Stomach (tissue), 19 donors: ENCODE measurements at regions of chr1 and their contacts with region 1.

Region 1: DNA sequence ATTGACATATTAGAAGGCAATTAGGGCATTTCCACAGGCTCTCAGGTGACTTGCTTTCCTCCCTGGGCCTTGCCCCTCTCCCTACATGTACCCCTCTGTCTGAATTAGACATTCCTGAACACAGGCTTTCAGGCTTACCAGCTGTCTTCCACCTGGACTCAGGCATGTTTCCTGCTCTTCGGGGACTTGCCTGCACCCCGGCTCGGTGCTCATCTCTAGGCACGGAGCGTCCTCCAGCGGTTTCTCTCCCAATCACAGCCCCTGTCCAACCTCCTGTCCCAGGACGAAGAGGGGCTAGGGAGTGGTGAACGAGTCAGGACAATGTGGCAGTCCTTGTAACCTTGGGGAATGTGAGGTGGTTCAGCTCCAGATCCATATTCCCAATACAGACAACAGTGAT is 4.2 kb downstream of the PROK1 start:
- DNase-seq: no peak
- H3K4me3 ChIP-seq: no peak overlapping the region
- H3K27ac ChIP-seq: no peak overlapping the region
- H3K4me1 ChIP-seq: no peaks in the 10 kb centered on the region
- H3K27me3 ChIP-seq: peaks cover 0 to 37% (median 5%) of the 10 kb centered on the region in 3 donors
- CTCF ChIP-seq: no peak
- EP300 ChIP-seq: no peak
- POLR2A ChIP-seq: no peak

Region 2: GRCh38 chr1:110136911-110137310 is 318.2 kb before region 1 on chr1:
- intact Hi-C with region 1: no loop called
- DNase-seq: peak; percentile 28 to 69
- H3K4me3 ChIP-seq: no peak overlapping the region
- H3K27ac ChIP-seq: no peak overlapping the region
- H3K4me1 ChIP-seq: peaks cover 0 to 8% (median 2%) of the 10 kb centered on the region in 4 donors
- H3K27me3 ChIP-seq: peaks cover 0 to 50% (median 13%) of the 10 kb centered on the region in 3 donors
- CTCF ChIP-seq: no peak
- EP300 ChIP-seq: no peak
- POLR2A ChIP-seq: no peak

Region 3: GRCh38 chr1:110196917-110197765 is 258.0 kb before region 1 on chr1:
- intact Hi-C with region 1: loop called (anchors 5 kb)
- DNase-seq: peak; percentile 37 to 70
- H3K4me3 ChIP-seq: no peak overlapping the region
- H3K27ac ChIP-seq: no peak overlapping the region
- H3K4me1 ChIP-seq: no peaks in the 10 kb centered on the region
- H3K27me3 ChIP-seq: no peaks in the 10 kb centered on the region
- CTCF ChIP-seq: peak in 5 of 7 experiments; percentile 62 to 88 (median 82)
- EP300 ChIP-seq: no peak
- POLR2A ChIP-seq: no peak

Region 4: GRCh38 chr1:110407260-110408210 is 47.6 kb before region 1 on chr1 and contains the start of gene LAMTOR5:
- intact Hi-C with region 1: no loop called
- DNase-seq: peak; percentile 94 to 98
- H3K4me3 ChIP-seq: peak within 1 kb of the TSS; percentile 65 to 90 (median 86)
- H3K27ac ChIP-seq: peak within 1 kb of the TSS; percentile 92 to 97 (median 95)
- H3K4me1 ChIP-seq: peaks cover 17 to 38% (median 33%) of the 10 kb centered on the region in 4 donors
- H3K27me3 ChIP-seq: no peaks in the 10 kb centered on the region
- CTCF ChIP-seq: no peak
- EP300 ChIP-seq: no peak
- POLR2A ChIP-seq: peak in 2 of 4 donors; percentile 73 to 80
- total RNA-seq, gene LAMTOR5: 8.5 to 48.8 (median 18.6) TPM in 4 of 5 donors, not detected in the other

Region 5: DNA sequence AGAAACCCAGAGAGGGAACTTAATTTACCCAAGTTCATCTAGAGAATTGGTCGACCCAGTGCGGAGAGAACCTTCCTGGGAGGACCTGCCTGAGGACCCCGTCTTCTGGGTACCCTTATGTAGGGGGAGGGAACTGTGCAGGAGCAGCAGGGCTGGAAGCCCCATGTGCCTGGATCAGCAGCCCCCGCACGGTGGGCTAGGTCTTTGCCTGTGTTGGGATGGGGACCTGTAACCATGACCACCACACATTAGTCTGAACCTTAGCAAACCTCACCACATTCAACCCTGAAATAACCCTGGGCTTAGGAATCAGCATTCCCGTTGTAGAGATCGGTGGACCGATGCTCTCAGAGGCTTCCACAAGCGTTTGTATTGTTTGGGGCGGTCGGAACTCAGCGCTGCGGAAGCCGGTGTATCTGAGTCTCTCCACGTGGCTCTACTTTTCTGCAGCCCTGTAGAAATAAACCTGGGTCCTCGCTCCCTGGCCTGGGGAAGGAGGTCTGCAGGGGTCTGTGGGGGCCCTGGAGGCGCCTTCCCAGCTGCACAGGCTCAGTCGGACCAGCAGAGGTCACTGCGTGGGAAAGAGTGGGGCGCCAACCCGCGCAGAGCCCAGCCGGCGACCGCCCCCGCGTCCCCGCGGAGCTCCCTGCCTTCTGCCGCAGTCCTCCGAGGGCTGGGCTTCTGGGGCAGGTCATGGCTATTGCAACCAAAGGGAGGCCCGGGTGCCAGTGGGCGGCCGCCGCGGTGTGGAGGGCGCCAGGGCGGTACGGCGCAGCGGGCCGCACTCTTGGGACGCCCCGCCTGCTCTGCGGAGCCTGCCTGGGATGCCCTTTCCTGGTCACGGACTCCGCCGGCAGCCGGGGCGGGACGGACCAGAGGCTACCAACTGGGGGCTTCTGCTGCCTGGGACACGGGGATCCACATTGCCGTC is 100.0 kb after region 1 on chr1:
- intact Hi-C with region 1: no loop called
- DNase-seq: peak; percentile 53 to 79
- H3K4me3 ChIP-seq: peak overlapping the region; percentile 36 to 43 (median 41)
- H3K27ac ChIP-seq: peak overlapping the region in 1 of 5 donors; percentile 51
- H3K4me1 ChIP-seq: peaks cover 9 to 13% (median 11%) of the 10 kb centered on the region in 4 donors
- H3K27me3 ChIP-seq: peaks cover 0 to 76% (median 22%) of the 10 kb centered on the region in 3 donors
- CTCF ChIP-seq: peak in 5 of 7 experiments; percentile 43 to 68 (median 57)
- EP300 ChIP-seq: no peak
- POLR2A ChIP-seq: no peak